IMR-90 (cell line): ENCODE measurements at regions of chr12 and their contacts with region 1.

Region 1: DNA sequence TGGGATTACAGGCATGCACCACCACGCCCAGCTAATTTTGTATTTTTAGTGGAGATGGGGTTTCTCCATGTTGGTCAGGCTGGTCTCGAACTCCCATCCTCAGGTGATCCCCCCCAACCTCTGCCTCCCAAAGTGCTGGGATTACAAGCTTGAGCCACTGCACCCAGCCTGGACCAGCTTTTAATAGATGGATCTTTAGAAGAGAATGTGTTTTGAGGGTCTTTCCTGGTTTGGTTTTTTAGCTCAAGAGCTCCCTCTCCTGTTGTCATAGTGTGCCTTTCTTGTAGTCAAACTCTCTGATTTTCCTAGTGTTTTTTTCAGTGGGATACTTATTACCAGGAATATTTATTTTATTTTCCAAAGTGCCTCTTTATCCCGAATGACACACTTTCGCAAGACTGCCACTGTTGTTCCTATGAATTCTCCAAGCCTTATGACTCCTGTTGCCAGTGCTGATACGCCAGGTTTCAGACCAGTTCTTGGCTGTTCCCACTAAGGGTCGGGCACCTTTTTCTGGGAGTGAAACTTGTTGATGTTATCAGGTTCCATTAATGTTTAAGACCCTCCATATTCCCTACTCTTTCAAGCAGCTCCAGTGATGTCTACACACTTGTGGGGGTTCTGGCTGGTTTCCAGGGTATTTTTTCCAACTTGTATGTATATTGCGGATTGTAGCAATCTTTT is 31.5 kb upstream of the LIMA1 start:
- DNase-seq: peak; percentile 80
- ATAC-seq: peak; percentile 70
- H3K4me3 ChIP-seq: no peak overlapping the region
- H3K27ac ChIP-seq: no peak overlapping the region
- H3K4me1 ChIP-seq: peaks cover 6% of the 10 kb centered on the region
- H3K27me3 ChIP-seq: no peaks in the 10 kb centered on the region
- CTCF ChIP-seq: peak; percentile 85
- POLR2A ChIP-seq: no peak
- RAD21 ChIP-seq: peak; percentile 90

Region 2: DNA sequence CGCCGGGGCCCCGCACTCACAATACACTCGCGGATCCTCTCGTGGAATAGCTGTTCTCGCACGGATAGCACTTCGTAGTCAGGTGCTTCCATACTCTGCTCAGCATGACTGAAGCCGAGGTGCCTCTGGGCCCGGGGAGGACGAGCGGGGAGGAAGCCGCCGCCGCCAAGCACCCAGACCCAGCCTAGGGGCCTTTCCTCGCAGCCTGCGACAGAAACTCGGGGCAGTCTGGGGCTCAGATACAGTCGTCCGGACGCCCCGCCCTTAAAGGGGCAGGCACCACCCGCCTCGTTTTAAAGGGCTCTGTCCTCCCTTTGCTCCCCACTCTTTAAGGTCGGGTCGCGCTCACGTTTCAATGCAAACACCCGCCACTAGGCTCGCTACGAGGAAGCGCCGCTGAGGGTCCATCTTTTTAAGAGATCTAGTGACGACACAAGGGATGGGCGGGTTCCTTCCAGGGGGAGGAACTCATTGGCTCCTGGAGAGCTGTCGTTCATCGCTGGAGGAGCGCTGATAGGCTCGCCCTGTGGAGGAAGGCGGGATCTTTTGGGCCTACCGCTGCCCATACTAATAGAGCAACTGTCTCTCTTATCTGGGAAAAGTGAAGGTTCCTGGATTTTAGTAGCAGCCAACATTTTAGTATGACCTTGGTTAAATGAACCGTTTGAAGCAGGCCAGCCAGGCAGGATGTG is 1204.2 kb before region 1 on chr12 and contains the start of gene LMBR1L:
- CTCF ChIA-PET with region 1: no interaction called
- POLR2A ChIA-PET with region 1: interaction called, 15 read pairs
- dilution Hi-C with region 1: no loop called
- in situ Hi-C with region 1: no loop called
- intact Hi-C with region 1: no loop called
- DNase-seq: peak; percentile 98
- ATAC-seq: peak; percentile 96
- H3K4me3 ChIP-seq: peak within 1 kb of the TSS; percentile 85
- H3K27ac ChIP-seq: peak within 1 kb of the TSS; percentile 92
- H3K4me1 ChIP-seq: peaks cover 13% of the 10 kb centered on the region
- H3K27me3 ChIP-seq: no peaks in the 10 kb centered on the region
- CTCF ChIP-seq: peak; percentile 54
- POLR2A ChIP-seq: peak; percentile 73
- RAD21 ChIP-seq: no peak
- total RNA-seq, gene LMBR1L: 18.1 and 33.0 TPM in 2 replicates

Region 3: GRCh38 chr12:50132505-50133135 is 182.2 kb before region 1 on chr12:
- CTCF ChIA-PET with region 1: interaction called, 4 read pairs
- POLR2A ChIA-PET with region 1: no interaction called
- dilution Hi-C with region 1: no loop called
- in situ Hi-C with region 1: no loop called
- intact Hi-C with region 1: loop called (anchors 1 kb)
- DNase-seq: peak; percentile 61
- ATAC-seq: peak; percentile 62
- H3K4me3 ChIP-seq: no peak overlapping the region
- H3K27ac ChIP-seq: peak overlapping the region; percentile 3; the same call in 1 of the 2 replicates
- H3K4me1 ChIP-seq: peaks cover 3% of the 10 kb centered on the region
- H3K27me3 ChIP-seq: no peaks in the 10 kb centered on the region
- CTCF ChIP-seq: peak; percentile 66
- POLR2A ChIP-seq: no peak
- RAD21 ChIP-seq: peak; percentile 55

Region 4: GRCh38 chr12:50187084-50187900 is 127.5 kb before region 1 on chr12:
- CTCF ChIA-PET with region 1: interaction called, 4 read pairs
- POLR2A ChIA-PET with region 1: no interaction called
- dilution Hi-C with region 1: no loop called
- in situ Hi-C with region 1: no loop called
- intact Hi-C with region 1: loop called (anchors 1 kb)
- DNase-seq: peak; percentile 94
- ATAC-seq: peak; percentile 79
- H3K4me3 ChIP-seq: no peak overlapping the region
- H3K27ac ChIP-seq: peak overlapping the region; percentile 97
- H3K4me1 ChIP-seq: peaks cover 30% of the 10 kb centered on the region
- H3K27me3 ChIP-seq: no peaks in the 10 kb centered on the region
- CTCF ChIP-seq: no peak
- POLR2A ChIP-seq: peak; percentile 37; the same call in 1 of the 2 replicates
- RAD21 ChIP-seq: no peak

Region 5: DNA sequence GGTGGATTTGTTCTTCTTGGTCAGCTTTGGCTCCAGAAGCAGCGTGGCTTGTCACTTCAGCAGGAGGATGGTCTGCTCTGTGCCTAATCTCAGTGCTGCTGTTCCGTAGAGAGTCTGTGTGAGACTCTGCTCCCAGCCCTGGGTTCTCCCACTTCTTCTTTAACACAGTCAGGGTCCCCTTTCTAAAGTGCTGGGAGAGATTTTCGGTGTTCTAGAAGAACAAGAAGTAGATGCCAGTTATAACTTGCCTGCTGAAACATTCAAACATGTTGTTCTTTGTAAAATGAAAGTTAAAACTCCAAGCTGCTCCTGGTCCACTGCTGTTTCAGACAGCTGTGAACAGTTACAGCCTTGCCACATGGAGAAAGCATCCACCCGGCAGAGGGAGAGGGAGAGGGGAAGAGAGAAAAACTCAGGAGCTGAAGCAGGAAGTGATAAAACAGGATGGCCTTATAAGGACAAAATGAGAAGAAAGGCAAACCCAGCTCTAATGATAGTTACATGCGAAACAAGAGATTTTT is 92.4 kb before region 1 on chr12:
- CTCF ChIA-PET with region 1: interaction called, 9 read pairs
- POLR2A ChIA-PET with region 1: interaction called, 4 read pairs
- dilution Hi-C with region 1: no loop called
- in situ Hi-C with region 1: no loop called
- intact Hi-C with region 1: loop called (anchors 1 kb)
- DNase-seq: peak; percentile 95
- ATAC-seq: peak; percentile 84
- H3K4me3 ChIP-seq: peak overlapping the region; percentile 75
- H3K27ac ChIP-seq: peak overlapping the region; percentile 100
- H3K4me1 ChIP-seq: peaks cover 12% of the 10 kb centered on the region
- H3K27me3 ChIP-seq: no peaks in the 10 kb centered on the region
- CTCF ChIP-seq: peak; percentile 41
- POLR2A ChIP-seq: peak; percentile 92
- RAD21 ChIP-seq: peak; percentile 58

Region 6: GRCh38 chr12:50400598-50401364 is 86.0 kb after region 1 on chr12 and contains the start of gene LARP4:
- CTCF ChIA-PET with region 1: no interaction called
- POLR2A ChIA-PET with region 1: no interaction called
- dilution Hi-C with region 1: no loop called
- in situ Hi-C with region 1: no loop called
- intact Hi-C with region 1: loop called (anchors 1 kb)
- DNase-seq: peak; percentile 92
- ATAC-seq: peak; percentile 97
- H3K4me3 ChIP-seq: peak within 1 kb of the TSS; percentile 81
- H3K27ac ChIP-seq: peak within 1 kb of the TSS; percentile 89
- H3K4me1 ChIP-seq: peaks cover 3% of the 10 kb centered on the region
- H3K27me3 ChIP-seq: no peaks in the 10 kb centered on the region
- CTCF ChIP-seq: no peak
- POLR2A ChIP-seq: peak; percentile 85
- RAD21 ChIP-seq: no peak
- total RNA-seq, gene LARP4: 41.7 and 42.5 TPM in 2 replicates

Region 7: GRCh38 chr12:50467439-50467838 is 152.7 kb after region 1 on chr12:
- CTCF ChIA-PET with region 1: no interaction called
- POLR2A ChIA-PET with region 1: no interaction called
- dilution Hi-C with region 1: no loop called
- in situ Hi-C with region 1: no loop called
- intact Hi-C with region 1: no loop called
- DNase-seq: no peak
- ATAC-seq: no peak
- H3K4me3 ChIP-seq: no peak overlapping the region
- H3K27ac ChIP-seq: no peak overlapping the region
- H3K4me1 ChIP-seq: no peaks in the 10 kb centered on the region
- H3K27me3 ChIP-seq: no peaks in the 10 kb centered on the region
- CTCF ChIP-seq: no peak
- POLR2A ChIP-seq: no peak
- RAD21 ChIP-seq: no peak